Posterior vena cava (tissue), 2 donors: ENCODE measurements at regions of chr16 and their contacts with region 1.

Region 1: DNA sequence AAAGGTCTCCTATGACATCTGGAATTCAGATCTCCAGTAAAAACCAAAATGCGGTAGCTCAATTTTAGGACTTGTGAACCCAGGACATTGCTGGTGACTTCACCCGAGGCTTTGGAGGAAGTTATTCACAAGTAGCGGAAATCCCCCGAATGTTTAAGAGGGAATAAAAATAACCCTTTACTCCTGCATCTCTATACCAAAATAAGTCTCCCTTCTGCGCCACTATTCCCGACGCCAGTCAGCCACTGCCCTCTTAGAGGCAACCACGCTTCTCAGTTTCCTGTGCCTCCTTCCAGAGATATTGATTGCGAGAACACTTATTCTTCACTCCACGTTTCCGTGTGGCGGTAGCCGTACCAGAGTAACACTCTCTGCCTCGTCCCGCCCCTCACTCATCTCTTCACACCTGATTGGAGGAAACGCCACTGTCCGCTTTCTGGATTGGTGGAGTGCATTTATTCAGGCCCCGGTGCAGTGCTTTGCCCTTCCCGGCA is 27.4 kb downstream of the EMP2 start:
- DNase-seq: no peak

Region 2: GRCh38 chr16:10806698-10807097 is 253.7 kb after region 1 on chr16:
- intact Hi-C with region 1: loop called in 1 of 2 experiments (anchors 5 kb)
- DNase-seq: no peak

Region 3: DNA sequence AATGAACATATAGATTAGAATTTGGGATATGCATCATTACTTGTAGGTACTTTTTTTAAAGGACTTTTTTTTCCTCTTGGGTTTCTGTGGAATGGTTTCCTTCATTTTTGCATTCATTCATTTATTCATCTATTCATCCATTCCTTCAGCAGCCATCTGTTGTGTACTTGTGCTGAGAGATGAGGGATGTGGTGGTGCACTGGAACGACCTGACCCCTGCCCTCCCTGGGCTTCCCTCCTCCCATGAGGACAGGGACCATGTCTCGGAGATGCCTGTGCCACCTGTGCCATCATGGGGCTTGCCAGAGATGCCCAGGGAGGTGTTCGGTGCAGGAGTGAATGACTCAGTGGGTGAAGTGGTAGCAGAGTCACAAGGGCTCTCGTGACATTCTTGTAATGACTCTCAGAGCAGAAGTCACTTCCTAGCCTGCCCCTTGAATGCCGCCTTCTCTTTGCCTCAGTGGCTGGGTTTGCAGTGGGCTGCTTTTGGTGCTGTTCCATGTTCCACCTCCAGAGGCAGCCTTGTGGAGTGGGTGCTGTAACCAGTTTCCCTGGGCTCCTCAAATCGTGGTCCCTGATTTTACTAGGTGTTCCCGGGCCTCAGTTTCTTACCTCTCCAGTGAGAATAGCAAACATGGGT is 435.2 kb after region 1 on chr16:
- intact Hi-C with region 1: no loop called
- DNase-seq: no peak